HCT116 (cell line): ENCODE measurements at regions of chr4 and their contacts with region 1.

Region 1: DNA sequence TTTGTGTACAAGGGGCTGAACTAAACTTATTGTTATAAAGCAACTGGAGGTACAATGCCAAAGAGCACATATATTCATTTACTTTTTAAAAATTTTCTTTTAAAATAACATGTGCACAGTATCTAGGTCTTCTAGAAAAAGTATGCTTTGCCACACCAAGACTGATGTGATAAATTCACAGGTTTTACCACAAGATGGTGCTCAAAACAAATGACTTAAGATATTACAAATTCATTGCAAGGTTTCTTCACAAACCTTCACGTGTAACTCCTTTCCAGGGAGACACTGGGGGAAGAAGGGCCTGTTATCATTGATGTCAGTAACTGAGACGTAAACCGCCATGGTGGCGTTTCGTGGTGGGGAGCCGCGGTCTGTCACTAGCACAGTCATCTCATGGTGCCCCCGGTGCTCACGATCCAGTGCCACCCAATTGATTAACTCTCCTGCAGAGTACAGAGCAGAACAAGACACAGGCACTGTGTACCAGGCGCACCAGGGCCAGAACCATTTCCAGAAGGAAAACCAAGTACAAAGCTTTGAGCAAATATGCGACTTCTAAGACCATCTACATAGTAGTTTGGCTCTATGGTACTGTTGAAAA is 162.2 kb downstream of the DCHS2 start:
- DNase-seq: no peak
- ATAC-seq: peak; percentile 86
- H3K4me3 ChIP-seq: no peak overlapping the region
- H3K27ac ChIP-seq: no peak overlapping the region
- H3K4me1 ChIP-seq: no peaks in the 10 kb centered on the region
- H3K27me3 ChIP-seq: no peaks in the 10 kb centered on the region
- CTCF ChIP-seq: peak; percentile 39 to 58 (median 55); a peak in 5 of 6 replicates
- POLR2A ChIP-seq: no peak
- RAD21 ChIP-seq: peak; percentile 63

Region 2: DNA sequence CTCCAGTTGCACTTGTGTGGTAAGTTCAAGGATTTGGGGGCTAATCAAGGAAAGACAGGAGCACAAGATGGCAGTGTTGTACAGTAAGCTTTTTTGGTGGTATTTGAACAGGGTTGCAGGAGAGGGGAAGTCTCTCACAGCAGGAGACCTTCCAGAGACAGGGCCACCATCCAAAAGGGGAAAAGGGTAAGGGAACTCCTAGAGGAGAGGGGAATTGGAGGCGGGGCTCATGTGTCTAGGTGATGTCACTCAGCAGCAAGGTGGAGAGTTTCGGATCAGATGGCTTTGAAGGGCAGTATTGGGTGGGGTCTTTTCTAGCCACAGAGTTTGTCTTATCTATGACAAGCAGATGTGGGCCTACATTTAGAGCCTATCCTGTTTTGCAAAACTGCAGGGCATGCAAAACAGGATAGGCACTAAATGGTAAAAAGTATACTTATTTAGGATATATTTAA is 556.1 kb before region 1 on chr4:
- CTCF ChIA-PET with region 1: no interaction called
- POLR2A ChIA-PET with region 1: no interaction called
- RAD21 ChIA-PET with region 1: no interaction called
- intact Hi-C with region 1: loop called (anchors 5 kb)
- DNase-seq: no peak
- ATAC-seq: no peak
- H3K4me3 ChIP-seq: no peak overlapping the region
- H3K27ac ChIP-seq: no peak overlapping the region
- H3K4me1 ChIP-seq: no peaks in the 10 kb centered on the region
- H3K27me3 ChIP-seq: no peaks in the 10 kb centered on the region
- CTCF ChIP-seq: peak in 2 of 3 experiments; percentile 13 to 34; a peak in 1 of 6 replicates
- POLR2A ChIP-seq: no peak
- RAD21 ChIP-seq: peak; percentile 51

Region 3: DNA sequence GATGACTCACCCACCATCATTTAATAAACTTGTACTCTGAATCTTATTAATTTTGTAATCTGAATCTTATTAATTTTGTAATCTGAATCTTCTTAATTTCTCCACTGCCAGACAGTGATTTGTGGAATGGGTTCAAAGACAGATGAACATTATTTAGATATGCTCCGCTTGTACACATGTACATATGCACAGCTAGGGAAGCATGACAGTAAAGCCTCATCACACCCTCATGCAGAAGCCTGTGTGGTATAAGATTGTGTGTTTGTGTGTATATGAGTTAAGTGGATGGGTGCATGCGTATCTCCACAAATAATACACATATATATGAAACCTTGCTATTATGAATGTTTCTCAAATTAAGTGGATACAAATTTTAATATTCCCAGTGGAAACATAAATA is 222.0 kb before region 1 on chr4:
- CTCF ChIA-PET with region 1: no interaction called
- POLR2A ChIA-PET with region 1: no interaction called
- RAD21 ChIA-PET with region 1: no interaction called
- intact Hi-C with region 1: no loop called
- DNase-seq: no peak
- ATAC-seq: no peak
- H3K4me3 ChIP-seq: no peak overlapping the region
- H3K27ac ChIP-seq: no peak overlapping the region
- H3K4me1 ChIP-seq: no peaks in the 10 kb centered on the region
- H3K27me3 ChIP-seq: no peaks in the 10 kb centered on the region
- CTCF ChIP-seq: no peak
- POLR2A ChIP-seq: no peak
- RAD21 ChIP-seq: no peak

Region 4: GRCh38 chr4:154361450-154361849 is 32.1 kb after region 1 on chr4:
- CTCF ChIA-PET with region 1: no interaction called
- POLR2A ChIA-PET with region 1: no interaction called
- RAD21 ChIA-PET with region 1: no interaction called
- intact Hi-C with region 1: no loop called
- DNase-seq: no peak
- ATAC-seq: no peak
- H3K4me3 ChIP-seq: no peak overlapping the region
- H3K27ac ChIP-seq: no peak overlapping the region
- H3K4me1 ChIP-seq: no peaks in the 10 kb centered on the region
- H3K27me3 ChIP-seq: no peaks in the 10 kb centered on the region
- CTCF ChIP-seq: no peak
- POLR2A ChIP-seq: no peak
- RAD21 ChIP-seq: no peak